ENCODE measurements at regions of chr5 and their contacts with region 1.

Region 1: GRCh38 chr5:32585446-32586275 is at the start of gene SUB1:
- DNase-seq: peak; percentile 94
- H3K4me3 Mint-ChIP-seq: peak within 1 kb of the TSS; percentile 99
- H3K27ac Mint-ChIP-seq: peak within 1 kb of the TSS; percentile 99
- H3K4me1 Mint-ChIP-seq: peaks cover 54% of the 10 kb centered on the region
- H3K27me3 Mint-ChIP-seq: no peaks in the 10 kb centered on the region
- total RNA-seq, gene SUB1: 397 to 400 TPM

Region 2: GRCh38 chr5:32232441-32233219 is 353.0 kb before region 1 on chr5:
- CTCF ChIA-PET with region 1: interaction called, 15 read pairs
- intact Hi-C with region 1: loop called (anchors 1 kb)
- DNase-seq: peak; percentile 88
- H3K4me3 Mint-ChIP-seq: no peak overlapping the region
- H3K27ac Mint-ChIP-seq: no peak overlapping the region
- H3K4me1 Mint-ChIP-seq: peaks cover 7% of the 10 kb centered on the region
- H3K27me3 Mint-ChIP-seq: no peaks in the 10 kb centered on the region

Region 3: GRCh38 chr5:32462618-32463017 is 123.0 kb before region 1 on chr5:
- CTCF ChIA-PET with region 1: interaction called, 6 read pairs
- intact Hi-C with region 1: loop called (anchors 1 kb)
- DNase-seq: peak; percentile 71
- H3K4me3 Mint-ChIP-seq: no peak overlapping the region
- H3K27ac Mint-ChIP-seq: peak overlapping the region; percentile 89
- H3K4me1 Mint-ChIP-seq: peaks cover 13% of the 10 kb centered on the region
- H3K27me3 Mint-ChIP-seq: no peaks in the 10 kb centered on the region

Region 4: GRCh38 chr5:32504989-32505596 is 80.6 kb before region 1 on chr5:
- CTCF ChIA-PET with region 1: interaction called, 19 read pairs
- intact Hi-C with region 1: no loop called
- DNase-seq: peak; percentile 26
- H3K4me3 Mint-ChIP-seq: no peak overlapping the region
- H3K27ac Mint-ChIP-seq: no peak overlapping the region
- H3K4me1 Mint-ChIP-seq: peaks cover 17% of the 10 kb centered on the region
- H3K27me3 Mint-ChIP-seq: no peaks in the 10 kb centered on the region

Region 5: GRCh38 chr5:32572778-32573480 is 12.7 kb before region 1 on chr5:
- CTCF ChIA-PET with region 1: interaction called, 7 read pairs
- intact Hi-C with region 1: loop called (anchors 1 kb)
- DNase-seq: no peak
- H3K4me3 Mint-ChIP-seq: no peak overlapping the region
- H3K27ac Mint-ChIP-seq: no peak overlapping the region
- H3K4me1 Mint-ChIP-seq: peaks cover 6% of the 10 kb centered on the region
- H3K27me3 Mint-ChIP-seq: no peaks in the 10 kb centered on the region

Measured in activated naive CD4-positive, alpha-beta T cell treated with anti-CD3 and anti-CD28 coated beads for 36 hours (primary cell).